Panc1 (cell line): ENCODE measurements at regions of chr3 and their contacts with region 1.

Region 1: DNA sequence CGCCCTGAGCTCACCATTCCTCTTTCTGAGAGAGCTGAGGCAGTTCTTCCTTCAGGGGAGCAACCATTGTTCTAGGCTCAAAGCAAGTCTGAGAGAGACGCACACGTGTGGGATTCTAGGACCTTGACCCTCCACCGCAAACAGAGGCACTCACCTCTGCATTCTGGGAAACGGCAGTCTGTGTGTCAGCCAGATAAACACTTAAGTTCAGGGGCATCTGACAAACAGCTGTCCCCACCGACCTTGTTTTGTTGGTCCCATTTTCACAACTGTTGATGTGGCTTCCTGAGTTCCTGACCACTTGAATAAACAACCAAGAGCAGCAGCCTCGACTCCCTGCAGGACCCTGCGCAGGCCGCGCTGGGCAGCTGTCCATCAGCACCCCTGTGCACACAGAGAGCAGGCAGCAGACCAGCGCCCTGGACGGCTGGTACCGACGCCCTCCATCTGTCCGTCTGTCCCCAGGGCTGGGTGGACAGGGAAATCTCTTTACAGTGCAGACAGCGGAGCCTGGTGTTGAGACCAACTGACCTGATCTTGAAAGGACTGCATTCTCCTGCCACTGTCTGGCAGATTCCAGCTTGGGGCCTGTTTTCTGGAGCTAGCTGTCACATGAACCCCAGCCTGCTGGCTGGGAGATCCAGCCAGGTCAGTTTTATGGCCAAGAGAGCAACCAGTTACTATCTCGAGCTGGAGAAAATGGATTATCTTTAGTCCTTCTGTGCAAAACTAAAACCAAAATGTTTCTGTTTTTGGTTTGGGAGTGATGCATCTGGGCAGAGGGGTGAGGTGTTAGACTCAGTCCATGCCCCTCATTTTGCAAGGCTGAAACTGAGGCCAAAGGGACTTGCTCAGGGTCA is 64.2 kb downstream of the FAM43A start:
- DNase-seq: no peak
- ATAC-seq: no peak
- H3K4me3 ChIP-seq: no peak overlapping the region
- H3K27ac ChIP-seq: no peak overlapping the region
- H3K4me1 ChIP-seq: no peaks in the 10 kb centered on the region
- H3K27me3 ChIP-seq: no peaks in the 10 kb centered on the region
- CTCF ChIP-seq: no peak

Region 2: DNA sequence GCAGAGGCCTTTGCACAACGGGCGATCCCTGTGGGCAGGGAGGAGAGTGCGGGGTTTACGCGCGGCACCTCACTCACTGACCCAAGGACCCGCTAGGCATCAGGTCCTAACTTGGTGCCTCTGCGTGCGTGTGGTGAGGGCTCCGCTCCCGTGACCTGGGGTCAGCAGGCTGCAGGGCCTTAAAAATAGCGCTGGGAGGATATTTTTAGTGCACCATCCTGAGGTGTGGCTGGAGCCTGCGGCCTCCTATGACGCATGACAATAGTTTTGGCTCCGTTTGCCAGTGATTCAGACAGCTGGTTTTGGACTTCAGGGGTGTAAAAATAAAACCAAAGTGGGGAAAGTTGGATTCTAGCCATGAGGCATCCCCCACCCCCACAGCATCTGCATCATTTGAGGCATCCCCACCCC is 74.8 kb after region 1 on chr3:
- CTCF ChIA-PET with region 1: no interaction called
- POLR2A ChIA-PET with region 1: no interaction called
- in situ Hi-C with region 1: no loop called
- intact Hi-C with region 1: no loop called
- DNase-seq: no peak
- ATAC-seq: no peak
- H3K4me3 ChIP-seq: no peak overlapping the region
- H3K27ac ChIP-seq: no peak overlapping the region
- H3K4me1 ChIP-seq: no peaks in the 10 kb centered on the region
- H3K27me3 ChIP-seq: no peaks in the 10 kb centered on the region
- CTCF ChIP-seq: no peak

Region 3: GRCh38 chr3:195282961-195283360 is 533.1 kb after region 1 on chr3:
- CTCF ChIA-PET with region 1: no interaction called
- POLR2A ChIA-PET with region 1: interaction called, 13 read pairs
- in situ Hi-C with region 1: no loop called
- intact Hi-C with region 1: no loop called
- DNase-seq: no peak
- ATAC-seq: no peak
- H3K4me3 ChIP-seq: no peak overlapping the region
- H3K27ac ChIP-seq: no peak overlapping the region
- H3K4me1 ChIP-seq: no peaks in the 10 kb centered on the region; the same call in 1 of the 2 replicates
- H3K27me3 ChIP-seq: no peaks in the 10 kb centered on the region
- CTCF ChIP-seq: no peak